ENCODE measurements at regions of chr14 and their contacts with region 1.

Region 1: GRCh38 chr14:61388173-61388975 is 67.0 kb downstream of the PRKCH start:
- DNase-seq: no peak
- H3K4me3 Mint-ChIP-seq: no peak overlapping the region
- H3K27ac Mint-ChIP-seq: no peak overlapping the region
- H3K4me1 Mint-ChIP-seq: peaks cover 13% of the 10 kb centered on the region
- H3K27me3 Mint-ChIP-seq: no peaks in the 10 kb centered on the region

Region 2: GRCh38 chr14:60926002-60926401 is 462.4 kb before region 1 on chr14:
- intact Hi-C with region 1: no loop called
- DNase-seq: no peak
- H3K4me3 Mint-ChIP-seq: no peak overlapping the region
- H3K27ac Mint-ChIP-seq: no peak overlapping the region
- H3K4me1 Mint-ChIP-seq: peaks cover 7% of the 10 kb centered on the region
- H3K27me3 Mint-ChIP-seq: no peaks in the 10 kb centered on the region

Region 3: DNA sequence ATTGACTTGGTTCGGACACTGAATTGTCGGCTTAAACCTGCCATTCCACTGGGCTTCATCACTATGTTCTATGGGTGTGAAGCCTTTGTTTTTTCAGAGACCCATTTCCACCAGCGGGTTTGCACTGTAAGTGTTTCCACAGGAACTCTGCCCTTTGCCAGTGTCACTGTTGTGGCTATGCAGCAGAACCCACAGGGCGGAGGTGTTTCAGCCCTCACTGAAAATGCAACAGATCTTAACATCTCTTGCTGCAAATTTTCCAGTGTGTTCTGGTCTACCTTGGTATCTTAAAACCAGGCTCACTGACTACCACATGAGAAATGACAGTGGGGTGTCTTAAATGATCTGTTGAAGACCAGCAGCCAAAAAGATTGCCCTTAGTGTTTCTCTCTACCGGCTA is 45.9 kb before region 1 on chr14:
- intact Hi-C with region 1: loop called (anchors 1 kb)
- DNase-seq: peak; percentile 85
- H3K4me3 Mint-ChIP-seq: peak overlapping the region; percentile 82
- H3K27ac Mint-ChIP-seq: peak overlapping the region; percentile 97
- H3K4me1 Mint-ChIP-seq: peaks cover 92% of the 10 kb centered on the region
- H3K27me3 Mint-ChIP-seq: no peaks in the 10 kb centered on the region

Region 4: DNA sequence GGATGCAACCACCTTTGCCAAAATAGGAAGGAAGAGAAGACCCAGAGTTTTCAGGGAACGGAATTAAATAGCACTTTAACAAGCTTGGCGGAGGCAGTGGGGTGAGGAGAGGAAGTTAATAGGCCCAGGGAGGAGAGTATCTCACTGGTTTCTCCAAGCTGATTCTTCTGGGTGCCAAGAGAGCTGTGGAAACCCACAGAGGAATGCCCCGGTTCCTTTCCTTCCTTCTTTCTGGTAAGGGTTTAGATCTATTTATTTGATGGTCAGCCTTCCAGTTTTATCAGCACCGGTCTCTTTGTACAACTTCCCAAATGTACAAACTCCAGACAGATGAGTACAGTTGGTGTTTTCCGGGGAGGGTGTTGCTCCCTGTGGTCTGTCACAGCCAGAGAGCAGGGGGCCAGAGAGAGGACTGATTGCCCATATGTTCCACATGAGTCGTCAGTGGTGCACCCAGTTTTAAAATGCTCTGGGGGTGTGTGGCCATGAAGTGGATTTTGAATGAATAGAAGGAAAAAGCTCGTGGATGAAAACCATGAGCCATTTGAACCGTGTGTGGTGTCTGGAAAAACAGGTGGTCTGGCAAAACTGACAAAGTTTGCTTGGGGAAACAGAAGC is 40.4 kb before region 1 on chr14:
- intact Hi-C with region 1: loop called (anchors 2 kb)
- DNase-seq: no peak
- H3K4me3 Mint-ChIP-seq: peak overlapping the region; percentile 70
- H3K27ac Mint-ChIP-seq: peak overlapping the region; percentile 95
- H3K4me1 Mint-ChIP-seq: peaks cover 96% of the 10 kb centered on the region
- H3K27me3 Mint-ChIP-seq: no peaks in the 10 kb centered on the region

Region 5: DNA sequence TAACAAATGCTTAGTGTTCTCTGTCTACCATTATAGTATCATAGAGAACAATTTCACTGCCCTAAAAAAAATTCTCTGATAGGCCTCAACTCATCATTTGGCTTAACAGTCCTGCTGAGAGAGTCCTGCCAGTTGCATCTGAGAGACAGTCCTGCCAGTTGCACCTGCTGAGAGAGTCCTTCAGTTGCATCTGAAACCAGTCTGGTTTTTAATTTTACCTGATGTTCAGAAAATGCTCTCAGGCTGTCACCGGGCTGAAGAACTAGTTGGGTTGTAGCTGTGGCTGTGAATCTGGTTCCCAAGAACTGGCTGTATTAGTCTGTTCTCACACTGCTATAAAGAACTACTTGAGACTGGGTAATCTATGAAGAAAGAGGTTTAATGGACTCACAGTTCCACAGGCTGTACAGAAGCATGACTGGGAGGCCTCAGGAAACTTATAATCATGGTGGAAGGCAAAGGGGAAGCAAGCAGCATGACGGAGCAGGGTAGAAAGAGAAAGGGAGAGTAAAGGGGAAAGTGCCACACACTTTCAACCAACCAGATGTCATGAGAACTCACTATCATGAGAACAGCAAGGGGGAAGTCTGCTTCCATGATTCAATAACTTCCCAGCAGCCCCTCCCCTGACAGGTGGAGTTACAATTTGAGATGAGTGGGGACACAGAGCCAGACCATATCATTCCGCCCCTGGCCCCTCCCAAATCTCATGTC is 15.4 kb before region 1 on chr14:
- intact Hi-C with region 1: loop called (anchors 2 kb)
- DNase-seq: no peak
- H3K4me3 Mint-ChIP-seq: peak overlapping the region; percentile 9
- H3K27ac Mint-ChIP-seq: no peak overlapping the region
- H3K4me1 Mint-ChIP-seq: peaks cover 62% of the 10 kb centered on the region
- H3K27me3 Mint-ChIP-seq: no peaks in the 10 kb centered on the region

Region 6: GRCh38 chr14:61403411-61403810 is 15.0 kb after region 1 on chr14:
- intact Hi-C with region 1: loop called (anchors 1 kb)
- DNase-seq: peak; percentile 45
- H3K4me3 Mint-ChIP-seq: peak overlapping the region; percentile 31
- H3K27ac Mint-ChIP-seq: peak overlapping the region; percentile 87
- H3K4me1 Mint-ChIP-seq: peaks cover 79% of the 10 kb centered on the region
- H3K27me3 Mint-ChIP-seq: no peaks in the 10 kb centered on the region

Region 7: GRCh38 chr14:61493239-61493638 is 104.9 kb after region 1 on chr14:
- intact Hi-C with region 1: no loop called
- DNase-seq: no peak
- H3K4me3 Mint-ChIP-seq: no peak overlapping the region
- H3K27ac Mint-ChIP-seq: no peak overlapping the region
- H3K4me1 Mint-ChIP-seq: peaks cover 21% of the 10 kb centered on the region
- H3K27me3 Mint-ChIP-seq: no peaks in the 10 kb centered on the region

Region 8: GRCh38 chr14:61620130-61620946 is 232.0 kb after region 1 on chr14:
- intact Hi-C with region 1: no loop called
- DNase-seq: no peak
- H3K4me3 Mint-ChIP-seq: no peak overlapping the region
- H3K27ac Mint-ChIP-seq: peak overlapping the region; percentile 31
- H3K4me1 Mint-ChIP-seq: peaks cover 54% of the 10 kb centered on the region
- H3K27me3 Mint-ChIP-seq: no peaks in the 10 kb centered on the region

Region 9: GRCh38 chr14:61698206-61698980 is 310.0 kb after region 1 on chr14:
- intact Hi-C with region 1: no loop called
- DNase-seq: no peak
- H3K4me3 Mint-ChIP-seq: peak overlapping the region; percentile 94
- H3K27ac Mint-ChIP-seq: peak overlapping the region; percentile 93
- H3K4me1 Mint-ChIP-seq: peaks cover 60% of the 10 kb centered on the region
- H3K27me3 Mint-ChIP-seq: no peaks in the 10 kb centered on the region